ENCODE measurements at regions of chr10 and their contacts with region 1.

Region 1: DNA sequence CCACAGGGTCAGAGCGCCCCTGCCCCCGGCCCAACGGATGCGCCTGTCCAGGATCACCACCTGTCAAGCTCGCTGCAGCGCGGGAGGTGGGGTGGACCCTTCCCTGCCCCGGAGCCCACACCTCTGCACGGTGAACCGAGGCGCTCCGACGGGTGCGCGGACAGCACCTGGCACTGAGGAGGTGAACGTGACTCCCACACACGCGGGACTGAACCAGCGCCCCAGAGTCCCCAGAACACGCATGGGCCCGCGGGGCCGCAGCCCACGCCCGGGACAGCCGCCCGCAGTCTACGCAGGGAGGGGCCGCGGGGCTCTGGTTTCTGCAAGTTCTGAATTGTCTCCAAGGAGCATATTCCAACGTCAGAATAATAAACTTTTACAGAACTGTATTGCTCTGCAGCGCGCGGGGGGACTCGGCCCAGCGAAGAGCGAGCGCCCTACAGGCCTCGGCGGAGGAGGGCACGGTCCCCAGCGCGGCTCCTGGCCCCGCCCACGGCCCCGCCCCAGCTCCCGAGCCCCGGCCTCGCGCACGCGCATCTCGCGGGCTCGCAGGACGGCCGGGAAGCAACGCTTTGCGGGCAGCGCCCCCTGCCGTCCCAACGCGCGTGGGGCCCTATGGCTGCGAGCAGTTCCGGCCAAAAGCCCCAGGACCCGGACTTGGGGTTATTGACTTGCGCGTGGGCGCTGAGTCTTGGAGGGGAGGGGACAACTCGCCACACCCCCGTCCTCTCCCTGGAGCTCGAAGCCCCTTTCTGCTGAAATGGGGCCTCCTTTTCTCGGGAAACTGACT is 29.7 kb downstream of the OAT start:
- DNase-seq: peak; percentile 100
- H3K4me3 ChIP-seq: peak overlapping the region; percentile 54 to 65
- H3K27ac ChIP-seq: no peak overlapping the region
- H3K4me1 ChIP-seq: peaks cover 0 to 6% of the 10 kb centered on the region in 2 experiments; a peak in 1 of 4 replicates
- H3K27me3 ChIP-seq: no peaks in the 10 kb centered on the region
- CTCF ChIP-seq: peak; percentile 87
- EP300 ChIP-seq: no peak
- RAD21 ChIP-seq: peak; percentile 94

Region 2: DNA sequence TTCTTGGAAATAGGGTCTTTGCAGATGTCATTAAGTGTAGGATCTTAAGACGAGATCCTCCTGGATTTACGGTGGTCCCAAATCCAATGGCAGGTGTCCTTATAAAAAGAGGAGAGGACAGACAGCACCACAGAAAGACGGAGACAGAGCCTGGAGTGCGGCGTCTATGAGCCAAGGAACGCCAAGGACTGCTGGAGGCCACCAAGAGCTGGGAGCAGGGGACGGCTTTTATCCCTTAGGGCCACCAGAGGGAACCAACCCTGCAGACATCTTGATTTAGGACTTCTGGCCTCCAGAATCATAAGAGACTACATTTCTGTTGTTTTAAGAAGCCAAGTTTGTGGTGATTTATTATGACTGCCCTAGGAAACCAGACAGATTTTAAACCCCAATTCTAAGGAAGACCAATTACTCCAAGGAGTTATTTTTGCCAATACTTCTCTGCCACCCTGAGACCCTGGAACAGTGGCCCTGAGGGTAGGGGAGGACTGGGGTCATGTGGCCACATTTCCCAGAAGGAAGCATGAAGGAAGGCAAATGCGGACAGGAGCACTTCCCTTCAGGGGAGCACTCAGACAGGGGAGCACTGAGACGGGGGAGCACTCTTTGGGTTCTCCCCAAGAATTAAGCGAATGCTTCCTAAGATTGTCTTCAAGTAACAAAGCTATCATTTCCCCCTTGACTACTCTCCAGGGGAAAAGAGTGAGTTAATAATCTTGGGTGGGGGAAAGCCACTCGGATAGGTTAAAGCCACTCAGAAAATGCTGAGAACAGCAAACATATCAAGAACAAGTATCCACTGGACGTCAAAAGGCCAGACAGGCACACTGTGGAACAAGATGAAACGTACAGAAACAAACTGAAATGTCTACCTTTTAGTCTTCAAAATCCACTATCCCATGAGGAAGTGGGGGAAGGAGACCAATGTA is 363.1 kb before region 1 on chr10:
- CTCF ChIA-PET with region 1: interaction called, 12 read pairs
- POLR2A ChIA-PET with region 1: no interaction called
- DNase-seq: peak; percentile 53
- H3K4me3 ChIP-seq: no peak overlapping the region
- H3K27ac ChIP-seq: no peak overlapping the region
- H3K4me1 ChIP-seq: no peaks in the 10 kb centered on the region
- H3K27me3 ChIP-seq: no peaks in the 10 kb centered on the region
- CTCF ChIP-seq: no peak
- EP300 ChIP-seq: no peak
- RAD21 ChIP-seq: peak; percentile 53

Region 3: DNA sequence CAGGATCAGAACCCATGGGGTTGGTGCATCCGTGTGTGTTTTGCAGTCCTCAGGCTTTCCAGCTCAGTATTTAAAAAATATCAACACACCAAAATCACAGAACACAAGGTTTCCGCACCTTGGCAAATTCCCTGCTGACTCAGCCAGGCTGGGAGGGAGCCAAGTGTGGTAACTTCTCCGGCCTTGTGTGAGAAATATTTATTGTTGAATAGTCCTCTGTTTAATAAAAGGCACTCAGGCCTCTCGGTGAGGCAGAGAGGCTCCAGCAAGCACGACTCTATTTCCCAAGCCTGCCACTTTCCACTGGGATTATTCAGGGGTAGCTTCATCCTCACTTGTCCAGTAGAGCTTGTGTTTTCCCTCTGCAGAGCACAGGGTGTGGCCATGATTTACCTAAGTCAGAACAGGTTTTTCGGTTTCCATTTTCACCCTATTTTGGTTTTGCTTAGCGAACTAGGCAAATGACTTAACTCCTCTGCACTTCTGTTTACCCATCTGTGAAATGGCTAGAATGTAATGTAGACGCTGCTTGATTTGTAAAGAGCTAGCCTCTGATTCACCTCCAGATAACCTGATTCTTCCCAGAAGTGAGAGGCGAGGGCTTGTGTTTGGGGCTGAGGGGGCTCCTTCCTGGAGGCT is 282.7 kb before region 1 on chr10:
- CTCF ChIA-PET with region 1: interaction called, 16 read pairs
- POLR2A ChIA-PET with region 1: no interaction called
- DNase-seq: no peak
- H3K4me3 ChIP-seq: no peak overlapping the region
- H3K27ac ChIP-seq: no peak overlapping the region
- H3K4me1 ChIP-seq: no peaks in the 10 kb centered on the region
- H3K27me3 ChIP-seq: no peaks in the 10 kb centered on the region
- CTCF ChIP-seq: no peak
- EP300 ChIP-seq: no peak
- RAD21 ChIP-seq: no peak

Region 4: DNA sequence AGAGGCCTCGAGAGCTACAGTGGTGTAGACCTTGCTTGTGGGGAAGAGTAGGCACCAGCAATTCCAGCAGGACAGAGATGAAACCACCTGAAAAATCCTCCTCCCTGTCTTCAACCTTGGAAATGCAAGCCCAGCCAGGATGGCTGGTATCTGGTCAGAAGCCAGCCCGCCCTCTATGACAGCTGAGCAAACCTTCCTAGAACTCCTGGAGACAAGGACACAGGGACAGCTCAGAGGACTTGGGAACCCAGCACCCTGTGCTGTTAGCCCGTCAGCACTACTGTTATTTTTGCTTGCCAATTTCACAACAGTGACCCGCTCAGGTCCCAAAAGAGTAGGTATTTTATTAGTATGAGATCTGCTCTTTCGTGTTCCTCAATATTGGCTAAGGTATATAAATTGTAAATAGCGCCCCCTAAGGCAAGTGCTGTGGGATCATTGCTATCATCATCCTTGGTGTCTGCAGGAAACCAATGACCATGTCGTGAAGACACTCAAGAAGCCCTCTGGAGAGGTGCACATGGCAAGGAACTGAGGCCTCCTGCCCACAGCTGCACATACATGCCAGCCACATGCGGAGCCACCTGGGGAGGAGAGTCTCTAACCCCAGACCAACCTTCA is 139.1 kb before region 1 on chr10:
- CTCF ChIA-PET with region 1: interaction called, 24 read pairs
- POLR2A ChIA-PET with region 1: no interaction called
- DNase-seq: no peak
- H3K4me3 ChIP-seq: no peak overlapping the region
- H3K27ac ChIP-seq: no peak overlapping the region
- H3K4me1 ChIP-seq: peaks cover 0 to 11% of the 10 kb centered on the region in 2 experiments; a peak in 1 of 4 replicates
- H3K27me3 ChIP-seq: no peaks in the 10 kb centered on the region
- CTCF ChIP-seq: no peak
- EP300 ChIP-seq: no peak
- RAD21 ChIP-seq: no peak

Region 5: GRCh38 chr10:124378881-124379471 is 10.0 kb before region 1 on chr10:
- CTCF ChIA-PET with region 1: interaction called, 15 read pairs
- POLR2A ChIA-PET with region 1: no interaction called
- DNase-seq: peak; percentile 11
- H3K4me3 ChIP-seq: no peak overlapping the region
- H3K27ac ChIP-seq: no peak overlapping the region
- H3K4me1 ChIP-seq: no peaks in the 10 kb centered on the region
- H3K27me3 ChIP-seq: no peaks in the 10 kb centered on the region
- CTCF ChIP-seq: no peak
- EP300 ChIP-seq: no peak
- RAD21 ChIP-seq: no peak

Region 6: DNA sequence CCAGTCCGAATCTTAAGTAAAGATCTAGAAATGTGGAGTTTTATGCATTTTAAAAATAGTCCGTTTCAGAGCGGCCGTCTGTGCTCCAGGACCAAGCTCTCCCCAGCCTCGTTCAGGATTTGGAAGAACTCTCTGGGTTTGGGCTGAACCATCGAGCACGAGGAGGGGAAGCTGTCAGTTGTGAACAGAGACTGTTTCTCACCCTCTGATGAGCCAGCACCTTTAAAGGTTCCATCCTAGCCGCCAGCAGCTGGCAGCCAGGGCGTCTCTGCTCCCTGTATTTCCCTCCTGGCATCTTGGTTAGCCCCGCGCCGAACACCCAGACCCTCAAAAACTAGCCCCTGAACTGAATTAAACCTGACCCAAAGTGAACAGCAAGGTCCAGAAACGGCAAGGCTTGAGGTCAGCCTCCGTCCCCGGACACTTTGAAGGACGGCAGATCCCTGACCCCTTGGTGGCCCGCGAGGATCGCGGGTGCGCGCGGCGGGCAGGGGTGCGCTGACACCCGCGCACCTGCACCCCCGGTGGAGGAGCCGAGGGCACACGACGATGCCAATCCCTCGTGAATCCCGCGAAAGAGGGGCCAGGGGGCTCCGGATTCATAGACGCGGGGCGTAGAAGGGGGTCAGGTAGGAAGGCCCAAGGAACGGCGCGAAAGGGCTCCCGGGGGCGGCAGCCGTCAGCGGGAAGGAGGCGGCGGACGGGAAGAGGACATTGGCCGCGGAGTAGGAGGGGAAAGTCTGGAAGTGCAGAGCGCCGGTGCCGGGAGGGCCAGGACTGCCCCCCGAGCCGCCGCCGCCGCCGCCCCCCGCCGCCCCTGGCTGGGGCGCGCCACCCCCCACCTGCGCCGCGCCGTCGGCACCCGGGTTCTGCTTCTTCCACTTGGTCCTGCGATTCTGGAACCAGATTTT is 58.1 kb after region 1 on chr10:
- CTCF ChIA-PET with region 1: no interaction called
- POLR2A ChIA-PET with region 1: no interaction called
- DNase-seq: peak; percentile 51
- H3K4me3 ChIP-seq: no peak overlapping the region
- H3K27ac ChIP-seq: no peak overlapping the region
- H3K4me1 ChIP-seq: peaks cover 0 to 3% of the 10 kb centered on the region in 2 experiments; a peak in 1 of 4 replicates
- H3K27me3 ChIP-seq: peaks cover 68% of the 10 kb centered on the region
- CTCF ChIP-seq: no peak
- EP300 ChIP-seq: no peak
- RAD21 ChIP-seq: no peak

Region 7: GRCh38 chr10:124560377-124561105 is 171.5 kb after region 1 on chr10:
- CTCF ChIA-PET with region 1: no interaction called
- POLR2A ChIA-PET with region 1: no interaction called
- DNase-seq: no peak
- H3K4me3 ChIP-seq: no peak overlapping the region
- H3K27ac ChIP-seq: no peak overlapping the region
- H3K4me1 ChIP-seq: no peaks in the 10 kb centered on the region
- H3K27me3 ChIP-seq: no peaks in the 10 kb centered on the region
- CTCF ChIP-seq: no peak
- EP300 ChIP-seq: no peak
- RAD21 ChIP-seq: no peak

Measured in SK-N-SH (cell line).